ENCODE measurements at regions of chr6 and their contacts with region 1.

Region 1: DNA sequence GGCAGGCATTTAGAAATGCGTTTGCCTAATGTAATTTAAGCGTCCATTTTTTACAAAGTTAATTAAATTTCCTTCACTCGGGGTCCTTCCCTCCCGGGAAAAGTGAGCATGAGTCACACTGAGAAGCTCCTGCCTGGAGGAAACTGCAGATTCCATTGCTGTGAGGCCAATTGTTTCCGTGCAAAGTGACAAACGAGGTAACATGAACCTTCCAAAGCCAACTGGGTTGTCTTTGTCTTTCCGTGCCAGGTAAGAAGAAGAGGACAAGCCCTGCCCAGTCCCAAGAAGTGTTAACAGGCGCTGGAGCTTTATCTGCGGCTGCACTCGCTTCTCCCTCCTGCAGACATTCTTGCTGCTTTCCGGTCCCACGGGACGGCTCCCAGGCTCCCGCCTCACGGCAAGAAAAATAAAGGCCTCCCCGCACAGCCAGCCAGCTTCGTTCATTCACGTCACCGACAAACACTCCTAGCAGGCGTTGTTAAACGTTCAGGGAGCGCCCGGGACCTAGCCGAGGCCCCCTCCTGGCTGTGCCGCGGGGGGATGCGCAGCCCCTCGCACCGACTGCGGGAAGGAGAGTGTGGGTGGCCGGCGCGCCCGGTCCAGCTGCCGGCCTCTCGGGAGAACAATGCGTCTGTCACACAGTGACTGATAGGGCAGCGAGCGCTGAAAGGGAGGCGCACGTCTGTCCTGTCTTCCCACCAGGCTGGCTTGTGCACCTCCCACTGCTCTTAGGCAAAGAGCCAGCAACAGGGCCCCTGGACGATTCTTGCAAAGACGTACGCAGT is 61.5 kb upstream of the HDDC2 start:
- DNase-seq: peak; percentile 70 to 86
- ATAC-seq: peak; percentile 82 to 95 (median 88)
- H3K4me3 ChIP-seq: peak overlapping the region; percentile 36 to 61 (median 54)
- H3K27ac ChIP-seq: peak overlapping the region; percentile 66 to 93 (median 81)
- H3K4me1 ChIP-seq: peaks cover 0 to 42% (median 18%) of the 10 kb centered on the region in 9 donors
- H3K27me3 ChIP-seq: peaks cover 0 to 40% (median 0%) of the 10 kb centered on the region in 7 donors
- CTCF ChIP-seq: peak in 1 of 9 donors; percentile 10

Region 2: GRCh38 chr6:125533710-125534397 is 170.6 kb after region 1 on chr6:
- intact Hi-C with region 1: loop called in 1 of 10 experiments (anchors 10 kb)
- DNase-seq: no peak
- ATAC-seq: peak in 1 of 8 donors; percentile 10
- H3K4me3 ChIP-seq: no peak overlapping the region
- H3K27ac ChIP-seq: no peak overlapping the region
- H3K4me1 ChIP-seq: peaks cover 0 to 10% (median 3%) of the 10 kb centered on the region in 9 donors
- H3K27me3 ChIP-seq: peaks cover 0 to 36% (median 6%) of the 10 kb centered on the region in 7 donors
- CTCF ChIP-seq: no peak

Region 3: GRCh38 chr6:125688138-125688537 is 324.9 kb after region 1 on chr6:
- intact Hi-C with region 1: no loop called
- DNase-seq: no peak
- ATAC-seq: no peak
- H3K4me3 ChIP-seq: no peak overlapping the region
- H3K27ac ChIP-seq: no peak overlapping the region
- H3K4me1 ChIP-seq: no peaks in the 10 kb centered on the region
- H3K27me3 ChIP-seq: no peaks in the 10 kb centered on the region
- CTCF ChIP-seq: no peak